GM13976 (cell line): ENCODE measurements at regions of chr1 and their contacts with region 1.

Region 1: DNA sequence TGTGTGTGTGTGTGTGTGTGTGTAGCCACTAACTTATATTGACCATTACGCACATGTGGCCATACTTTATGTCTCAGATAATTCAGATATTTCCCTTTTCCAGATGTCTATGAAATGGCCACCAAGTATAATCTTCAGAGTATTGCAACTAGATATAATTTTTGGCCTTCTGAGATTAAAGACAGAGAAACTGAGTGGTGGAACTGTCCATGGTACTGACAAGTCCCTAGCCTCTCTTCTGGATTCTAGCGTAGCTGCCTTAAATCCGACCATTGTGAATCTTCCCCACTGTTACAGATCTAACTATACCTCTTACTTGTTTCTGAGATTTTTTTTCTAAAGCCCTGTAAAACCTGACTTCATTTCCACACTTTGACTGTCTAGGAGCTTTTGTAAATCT is 100.0 kb upstream of the SERTAD4 start:
- DNase-seq: no peak
- CTCF ChIP-seq: no peak

Region 2: GRCh38 chr1:210311726-210312493 is 179.3 kb after region 1 on chr1:
- in situ Hi-C with region 1: loop called (anchors 10 kb)
- DNase-seq: no peak
- CTCF ChIP-seq: no peak